ENCODE measurements at regions of chr10 and their contacts with region 1.

Region 1: GRCh38 chr10:131312478-131312836 is 936 bp upstream of the TCERG1L start:
- DNase-seq: no peak
- H3K4me3 ChIP-seq: no peak overlapping the region
- H3K27ac ChIP-seq: no peak overlapping the region
- H3K4me1 ChIP-seq: no peaks in the 10 kb centered on the region
- H3K27me3 ChIP-seq: peaks cover 4% of the 10 kb centered on the region
- CTCF ChIP-seq: no peak

Region 2: GRCh38 chr10:130547368-130547767 is 765.1 kb before region 1 on chr10:
- CTCF ChIA-PET with region 1: no interaction called
- dilution Hi-C with region 1: no loop called
- in situ Hi-C with region 1: no loop called
- intact Hi-C with region 1: loop called (anchors 10 kb)
- DNase-seq: no peak
- H3K4me3 ChIP-seq: no peak overlapping the region
- H3K27ac ChIP-seq: no peak overlapping the region
- H3K4me1 ChIP-seq: no peaks in the 10 kb centered on the region
- H3K27me3 ChIP-seq: no peaks in the 10 kb centered on the region
- CTCF ChIP-seq: no peak

Region 3: GRCh38 chr10:130824230-130825014 is 488.0 kb before region 1 on chr10:
- CTCF ChIA-PET with region 1: no interaction called
- dilution Hi-C with region 1: no loop called
- in situ Hi-C with region 1: no loop called
- intact Hi-C with region 1: no loop called
- DNase-seq: no peak
- H3K4me3 ChIP-seq: no peak overlapping the region
- H3K27ac ChIP-seq: no peak overlapping the region
- H3K4me1 ChIP-seq: no peaks in the 10 kb centered on the region
- H3K27me3 ChIP-seq: no peaks in the 10 kb centered on the region
- CTCF ChIP-seq: no peak

Region 4: DNA sequence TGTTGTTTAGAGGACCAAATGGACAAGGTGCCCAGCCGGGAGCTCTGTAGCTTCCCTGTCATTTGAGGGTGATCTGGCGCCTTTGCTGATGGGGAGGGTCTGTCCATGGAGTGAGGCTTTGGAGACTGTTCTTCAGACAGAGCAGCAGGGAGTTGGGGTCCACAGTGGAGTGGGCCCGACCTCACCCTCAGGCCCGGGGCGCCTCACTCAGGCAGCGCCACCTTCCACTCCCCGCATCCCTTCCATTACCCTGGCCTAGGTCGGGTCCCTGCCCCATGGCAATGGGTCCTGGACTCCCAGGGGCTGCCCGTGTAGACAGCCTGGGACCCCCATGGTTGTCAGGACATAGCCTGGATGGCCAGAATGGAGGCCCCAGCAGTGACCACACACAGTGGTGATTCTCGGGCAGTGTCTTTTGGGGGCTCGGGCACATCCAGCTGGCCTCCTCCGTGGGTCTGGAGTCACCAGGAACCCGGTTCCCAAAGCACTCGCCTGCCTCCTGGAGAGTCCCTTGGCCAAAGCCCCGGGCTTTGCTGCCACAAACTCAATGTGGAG is 39.5 kb before region 1 on chr10:
- CTCF ChIA-PET with region 1: no interaction called
- dilution Hi-C with region 1: no loop called
- in situ Hi-C with region 1: no loop called
- intact Hi-C with region 1: no loop called
- DNase-seq: no peak
- H3K4me3 ChIP-seq: no peak overlapping the region
- H3K27ac ChIP-seq: no peak overlapping the region
- H3K4me1 ChIP-seq: no peaks in the 10 kb centered on the region
- H3K27me3 ChIP-seq: no peaks in the 10 kb centered on the region
- CTCF ChIP-seq: no peak